B cell (primary cell): ENCODE measurements at regions of chr17 and their contacts with region 1.

Region 1: DNA sequence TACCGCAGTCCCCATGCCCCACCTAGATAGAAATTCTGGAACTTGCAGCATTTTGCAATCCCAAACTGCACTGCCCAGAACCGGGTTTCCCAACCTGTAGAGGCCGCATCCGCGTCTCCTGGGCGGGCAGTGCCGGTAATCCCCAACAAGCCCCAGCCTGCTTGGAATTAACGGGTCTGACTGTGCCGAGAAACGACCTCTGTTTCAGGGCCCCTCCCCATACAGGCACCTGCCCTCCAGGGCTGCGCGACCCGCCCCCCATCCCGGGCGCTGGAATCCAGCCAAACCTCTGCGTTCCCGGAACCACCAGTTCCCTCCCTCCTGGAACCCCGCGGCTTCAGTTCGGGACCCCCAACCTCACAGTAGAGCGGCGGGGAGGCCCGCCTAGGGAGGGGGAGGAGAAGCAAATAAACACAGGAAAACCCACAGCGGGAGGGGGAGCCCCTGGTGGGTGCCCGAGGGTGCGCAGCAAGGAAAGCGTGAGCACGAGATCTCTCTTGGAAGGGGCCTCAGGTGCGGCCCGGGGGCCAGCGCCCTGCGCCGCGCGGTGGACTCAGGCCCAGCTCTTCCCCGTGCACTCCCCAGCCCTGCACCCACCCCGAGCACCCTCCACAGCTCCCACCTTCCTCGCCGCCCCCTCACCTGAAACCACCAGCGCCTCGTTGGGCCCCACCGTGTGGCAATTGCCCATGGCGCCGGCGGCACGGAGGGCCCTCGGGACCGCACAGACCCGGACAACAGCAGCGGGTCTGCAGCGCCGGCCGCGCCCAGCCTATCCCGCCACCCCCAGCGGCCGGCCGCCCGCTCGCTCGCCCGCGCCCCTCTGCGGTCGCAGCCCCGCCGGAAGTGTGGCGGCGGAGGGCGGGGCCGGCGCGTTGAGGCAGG is at the start of gene FLOT2:
- DNase-seq: peak; percentile 76
- ATAC-seq: peak; percentile 60
- H3K4me3 ChIP-seq: peak within 1 kb of the TSS; percentile 71 to 95 (median 82)
- H3K4me3 Mint-ChIP-seq: peak within 1 kb of the TSS; percentile 97
- H3K27ac ChIP-seq: peak within 1 kb of the TSS; percentile 82 to 97
- H3K27ac Mint-ChIP-seq: peak within 1 kb of the TSS; percentile 99
- H3K4me1 ChIP-seq: peaks cover 62 to 73% of the 10 kb centered on the region in 2 donors
- H3K4me1 Mint-ChIP-seq: peaks cover 68% of the 10 kb centered on the region
- H3K27me3 ChIP-seq: no peaks in the 10 kb centered on the region
- H3K27me3 Mint-ChIP-seq: no peaks in the 10 kb centered on the region
- CTCF ChIP-seq: peak; percentile 57
- total RNA-seq, gene FLOT2: 251 and 270 TPM in 2 replicates

Region 2: GRCh38 chr17:28828294-28829040 is 68.7 kb before region 1 on chr17:
- CTCF ChIA-PET with region 1: no interaction called
- POLR2A ChIA-PET with region 1: no interaction called
- intact Hi-C with region 1: no loop called
- DNase-seq: no peak
- ATAC-seq: no peak
- H3K4me3 ChIP-seq: no peak overlapping the region
- H3K4me3 Mint-ChIP-seq: no peak overlapping the region
- H3K27ac ChIP-seq: no peak overlapping the region
- H3K27ac Mint-ChIP-seq: no peak overlapping the region
- H3K4me1 ChIP-seq: no peaks in the 10 kb centered on the region
- H3K4me1 Mint-ChIP-seq: peaks cover 2% of the 10 kb centered on the region
- H3K27me3 ChIP-seq: no peaks in the 10 kb centered on the region
- H3K27me3 Mint-ChIP-seq: no peaks in the 10 kb centered on the region
- CTCF ChIP-seq: no peak

Region 3: GRCh38 chr17:28871056-28871579 is 26.0 kb before region 1 on chr17:
- CTCF ChIA-PET with region 1: interaction called, 16 read pairs
- POLR2A ChIA-PET with region 1: interaction called, 8 read pairs
- intact Hi-C with region 1: loop called (anchors 5 kb)
- DNase-seq: peak; percentile 68
- ATAC-seq: peak; percentile 99
- H3K4me3 ChIP-seq: no peak overlapping the region
- H3K4me3 Mint-ChIP-seq: peak overlapping the region; percentile 68
- H3K27ac ChIP-seq: peak overlapping the region; percentile 65 to 90
- H3K27ac Mint-ChIP-seq: peak overlapping the region; percentile 97
- H3K4me1 ChIP-seq: peaks cover 13 to 23% of the 10 kb centered on the region in 2 donors
- H3K4me1 Mint-ChIP-seq: peaks cover 23% of the 10 kb centered on the region
- H3K27me3 ChIP-seq: no peaks in the 10 kb centered on the region
- H3K27me3 Mint-ChIP-seq: no peaks in the 10 kb centered on the region
- CTCF ChIP-seq: no peak

Region 4: DNA sequence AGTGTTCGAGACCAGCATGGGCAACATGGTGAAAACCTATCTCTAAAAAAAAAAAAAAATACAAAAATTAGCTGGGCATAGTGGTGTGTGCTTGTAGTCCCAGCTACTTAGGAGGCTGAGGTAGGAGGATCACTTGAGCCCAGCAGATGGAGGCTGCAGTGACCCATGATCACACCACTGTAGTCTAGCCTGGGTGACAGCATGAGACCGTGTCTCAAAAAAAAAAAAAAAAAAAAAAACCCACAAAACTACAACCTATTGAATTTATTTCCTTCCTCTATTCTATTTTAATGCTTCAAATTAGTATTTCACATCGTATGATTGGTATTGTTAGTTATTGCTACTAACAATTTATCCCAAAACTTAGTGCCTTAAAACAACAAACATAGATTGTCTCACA is 406.3 kb after region 1 on chr17:
- CTCF ChIA-PET with region 1: no interaction called
- POLR2A ChIA-PET with region 1: interaction called, 11 read pairs
- intact Hi-C with region 1: no loop called
- DNase-seq: no peak
- ATAC-seq: no peak
- H3K4me3 ChIP-seq: no peak overlapping the region
- H3K4me3 Mint-ChIP-seq: no peak overlapping the region
- H3K27ac ChIP-seq: peak overlapping the region in 1 of 2 donors; percentile 18
- H3K27ac Mint-ChIP-seq: no peak overlapping the region
- H3K4me1 ChIP-seq: peaks cover 10 to 17% of the 10 kb centered on the region in 2 donors
- H3K4me1 Mint-ChIP-seq: peaks cover 11% of the 10 kb centered on the region
- H3K27me3 ChIP-seq: no peaks in the 10 kb centered on the region
- H3K27me3 Mint-ChIP-seq: no peaks in the 10 kb centered on the region
- CTCF ChIP-seq: no peak

Region 5: DNA sequence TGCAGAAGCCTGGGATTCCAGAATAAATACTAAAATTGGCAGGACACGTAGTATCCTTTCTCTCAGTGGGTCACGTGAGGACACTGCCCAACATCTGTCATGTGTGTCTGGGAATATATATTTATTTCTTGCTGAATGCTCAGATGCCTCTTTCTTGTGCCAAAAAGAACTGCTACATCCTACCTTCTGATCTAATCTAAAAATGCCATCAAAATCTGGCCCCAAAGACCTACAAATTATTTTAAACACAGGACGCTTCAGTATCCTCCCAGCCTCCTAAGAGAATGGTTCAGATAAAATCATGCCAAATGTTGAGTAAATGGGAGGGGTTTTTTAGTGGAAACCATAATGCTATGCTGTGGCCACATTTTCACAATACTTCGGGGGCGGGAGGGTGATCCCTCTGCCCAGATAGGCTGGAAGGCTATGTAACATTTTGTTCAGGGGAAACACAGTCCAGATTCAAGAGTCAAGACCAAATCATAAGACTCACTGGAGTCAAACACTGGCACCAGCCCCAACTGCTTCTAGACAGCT is 748.5 kb after region 1 on chr17:
- CTCF ChIA-PET with region 1: no interaction called
- POLR2A ChIA-PET with region 1: no interaction called
- intact Hi-C with region 1: no loop called
- DNase-seq: no peak
- ATAC-seq: no peak
- H3K4me3 ChIP-seq: no peak overlapping the region
- H3K4me3 Mint-ChIP-seq: no peak overlapping the region
- H3K27ac ChIP-seq: no peak overlapping the region
- H3K27ac Mint-ChIP-seq: no peak overlapping the region
- H3K4me1 ChIP-seq: peaks cover under 1 to 2% of the 10 kb centered on the region in 2 donors
- H3K4me1 Mint-ChIP-seq: peaks cover 16% of the 10 kb centered on the region
- H3K27me3 ChIP-seq: no peaks in the 10 kb centered on the region
- H3K27me3 Mint-ChIP-seq: no peaks in the 10 kb centered on the region
- CTCF ChIP-seq: no peak